ENCODE measurements at regions of chr1 and their contacts with region 1.

Region 1: DNA sequence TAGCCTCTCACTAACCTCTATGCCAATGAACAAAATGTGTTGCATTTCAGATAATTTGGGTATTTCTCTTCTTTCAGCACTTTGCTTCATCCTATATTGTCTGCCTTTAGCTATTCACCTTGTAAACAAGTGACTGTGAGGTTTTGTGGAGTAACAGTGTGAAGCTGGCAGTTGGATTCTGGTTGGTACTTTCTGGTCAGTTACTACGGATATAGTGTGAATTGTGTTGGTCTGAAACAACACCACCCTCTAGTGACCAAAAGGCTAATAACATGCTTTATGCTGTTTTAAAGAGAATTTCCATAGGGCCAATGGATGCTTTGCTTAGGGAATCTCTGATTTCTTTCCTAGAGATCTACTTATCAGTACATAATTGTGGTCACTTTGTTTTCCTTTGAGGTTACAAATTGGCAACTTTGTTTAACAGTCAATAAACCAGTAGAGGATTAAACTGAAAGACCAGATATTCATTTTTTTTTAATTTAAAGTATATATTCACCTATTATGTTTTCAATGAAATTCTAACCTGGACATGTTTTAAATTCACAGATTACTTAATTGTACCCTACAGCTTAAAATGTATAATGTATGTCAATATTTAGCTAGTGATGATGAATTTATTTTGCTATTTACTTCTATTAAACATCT is 2.5 kb upstream of the PTGER3 start:
- DNase-seq: peak; percentile 61
- ATAC-seq: peak; percentile 80
- H3K4me3 ChIP-seq: no peak overlapping the region
- H3K27ac ChIP-seq: no peak overlapping the region
- H3K4me1 ChIP-seq: no peaks in the 10 kb centered on the region
- H3K27me3 ChIP-seq: no peaks in the 10 kb centered on the region
- CTCF ChIP-seq: peak; percentile 49 to 72 (median 61); a peak in 5 of 6 replicates
- POLR2A ChIP-seq: no peak
- RAD21 ChIP-seq: peak; percentile 83

Region 2: DNA sequence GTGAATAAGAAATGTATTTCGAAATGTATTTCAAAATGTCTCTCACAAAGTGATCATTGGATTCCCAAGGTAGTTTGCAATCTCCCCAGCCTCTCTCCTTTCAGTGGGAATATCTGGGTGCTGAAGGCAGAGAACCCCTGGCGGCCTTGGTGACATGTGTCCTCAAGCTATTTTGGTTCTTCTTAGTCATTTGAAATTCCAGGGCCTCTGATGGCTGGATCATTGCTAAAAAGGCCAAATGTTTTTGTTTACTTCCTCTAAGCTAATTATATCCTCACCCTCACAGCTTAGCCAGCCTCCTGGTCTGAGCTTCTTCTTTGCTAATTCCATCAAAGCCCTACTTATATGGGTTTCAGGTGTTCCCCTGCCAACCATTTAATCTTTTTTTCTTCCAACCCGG is 915.9 kb before region 1 on chr1:
- CTCF ChIA-PET with region 1: no interaction called
- POLR2A ChIA-PET with region 1: no interaction called
- RAD21 ChIA-PET with region 1: no interaction called
- intact Hi-C with region 1: loop called (anchors 10 kb)
- DNase-seq: no peak
- ATAC-seq: no peak
- H3K4me3 ChIP-seq: no peak overlapping the region
- H3K27ac ChIP-seq: no peak overlapping the region
- H3K4me1 ChIP-seq: peaks cover 3 to 12% of the 10 kb centered on the region in 2 experiments; a peak in 3 of 4 replicates
- H3K27me3 ChIP-seq: no peaks in the 10 kb centered on the region
- CTCF ChIP-seq: no peak
- POLR2A ChIP-seq: no peak
- RAD21 ChIP-seq: no peak

Region 3: GRCh38 chr1:70528590-70529333 is 521.3 kb before region 1 on chr1:
- CTCF ChIA-PET with region 1: interaction called, 5 read pairs
- POLR2A ChIA-PET with region 1: no interaction called
- RAD21 ChIA-PET with region 1: no interaction called
- intact Hi-C with region 1: loop called (anchors 1 kb)
- DNase-seq: peak; percentile 12
- ATAC-seq: peak; percentile 96
- H3K4me3 ChIP-seq: no peak overlapping the region
- H3K27ac ChIP-seq: no peak overlapping the region
- H3K4me1 ChIP-seq: no peaks in the 10 kb centered on the region
- H3K27me3 ChIP-seq: peaks cover 20% of the 10 kb centered on the region
- CTCF ChIP-seq: peak in 2 of 3 experiments; percentile 57; a peak in 4 of 6 replicates
- POLR2A ChIP-seq: no peak
- RAD21 ChIP-seq: peak; percentile 59

Region 4: GRCh38 chr1:70685300-70686241 is 364.5 kb before region 1 on chr1:
- CTCF ChIA-PET with region 1: interaction called, 4 read pairs
- POLR2A ChIA-PET with region 1: no interaction called
- RAD21 ChIA-PET with region 1: no interaction called
- intact Hi-C with region 1: loop called (anchors 2 kb)
- DNase-seq: peak; percentile 41
- ATAC-seq: peak; percentile 87
- H3K4me3 ChIP-seq: no peak overlapping the region
- H3K27ac ChIP-seq: no peak overlapping the region
- H3K4me1 ChIP-seq: no peaks in the 10 kb centered on the region
- H3K27me3 ChIP-seq: peaks cover 23% of the 10 kb centered on the region
- CTCF ChIP-seq: peak; percentile 20 to 84 (median 81); a peak in 5 of 6 replicates
- POLR2A ChIP-seq: no peak
- RAD21 ChIP-seq: peak; percentile 58

Measured in HCT116 (cell line).